Activated CD8-positive, alpha-beta T cell treated with anti-CD3 and anti-CD28 coated beads for 36 hours (primary cell): ENCODE measurements at regions of chr11 and their contacts with region 1.

Region 1: GRCh38 chr11:111777094-111778046 is 11.2 kb upstream of the PPP2R1B start:
- DNase-seq: peak; percentile 18
- ATAC-seq: peak; percentile 91
- H3K4me3 Mint-ChIP-seq: no peak overlapping the region
- H3K27ac Mint-ChIP-seq: no peak overlapping the region
- H3K4me1 Mint-ChIP-seq: no peaks in the 10 kb centered on the region
- H3K27me3 Mint-ChIP-seq: no peaks in the 10 kb centered on the region
- CTCF ChIP-seq: peak; percentile 80

Region 2: GRCh38 chr11:111565114-111565720 is 212.2 kb before region 1 on chr11:
- CTCF ChIA-PET with region 1: interaction called, 12 read pairs
- POLR2A ChIA-PET with region 1: no interaction called
- intact Hi-C with region 1: no loop called
- DNase-seq: peak; percentile 80
- ATAC-seq: peak; percentile 45
- H3K4me3 Mint-ChIP-seq: no peak overlapping the region
- H3K27ac Mint-ChIP-seq: no peak overlapping the region
- H3K4me1 Mint-ChIP-seq: peaks cover 4% of the 10 kb centered on the region
- H3K27me3 Mint-ChIP-seq: peaks cover under 1% of the 10 kb centered on the region
- CTCF ChIP-seq: peak; percentile 97

Region 3: DNA sequence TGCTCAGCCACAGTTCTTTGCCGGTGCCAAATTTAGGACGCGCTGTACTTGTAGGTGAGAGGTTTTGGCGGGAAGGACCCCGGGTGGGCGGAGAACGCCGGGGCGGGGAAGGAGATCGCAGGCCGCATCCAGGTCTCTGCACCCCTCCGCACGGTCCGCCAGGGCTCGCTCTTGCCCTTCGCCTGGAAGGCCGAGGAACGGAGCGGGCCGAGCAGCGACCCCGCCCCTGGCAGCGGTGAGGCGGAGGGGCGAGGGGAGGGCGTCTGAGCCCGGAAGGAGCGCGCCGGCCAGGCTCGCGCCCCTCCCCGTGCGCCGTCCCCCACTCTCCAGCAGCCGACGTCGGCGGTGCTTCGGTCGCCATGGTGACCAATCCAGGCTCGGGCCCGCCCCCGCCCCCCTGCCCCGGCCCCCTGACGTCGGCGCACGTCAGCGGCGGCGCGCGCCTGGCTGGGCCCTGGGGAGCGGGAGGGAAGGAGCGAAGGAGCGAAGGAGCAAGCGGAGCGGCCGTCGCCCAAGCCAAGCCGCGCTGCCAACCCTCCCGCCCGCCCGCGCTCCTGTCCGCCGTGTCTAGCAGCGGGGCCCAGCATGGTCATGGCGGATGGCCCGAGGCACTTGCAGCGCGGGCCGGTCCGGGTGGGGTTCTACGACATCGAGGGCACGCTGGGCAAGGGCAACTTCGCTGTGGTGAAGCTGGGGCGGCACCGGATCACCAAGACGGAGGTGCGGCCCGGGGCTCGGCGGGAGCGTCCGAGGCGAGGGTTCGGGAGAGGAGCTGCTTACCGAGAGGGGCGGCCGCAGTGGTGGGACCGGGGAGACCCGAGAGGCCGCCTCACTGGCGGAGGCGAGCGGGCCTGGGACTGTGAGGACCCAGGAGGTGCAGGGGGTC is 175.1 kb before region 1 on chr11 and contains the start of gene SIK2:
- CTCF ChIA-PET with region 1: interaction called, 42 read pairs
- POLR2A ChIA-PET with region 1: no interaction called
- intact Hi-C with region 1: loop called (anchors 1 kb)
- DNase-seq: peak; percentile 94
- ATAC-seq: peak; percentile 93
- H3K4me3 Mint-ChIP-seq: peak within 1 kb of the TSS; percentile 92
- H3K27ac Mint-ChIP-seq: peak within 1 kb of the TSS; percentile 93
- H3K4me1 Mint-ChIP-seq: peaks cover 28% of the 10 kb centered on the region
- H3K27me3 Mint-ChIP-seq: no peaks in the 10 kb centered on the region
- CTCF ChIP-seq: peak; percentile 74
- total RNA-seq, gene SIK2: 7.4 to 8.0 TPM

Region 4: DNA sequence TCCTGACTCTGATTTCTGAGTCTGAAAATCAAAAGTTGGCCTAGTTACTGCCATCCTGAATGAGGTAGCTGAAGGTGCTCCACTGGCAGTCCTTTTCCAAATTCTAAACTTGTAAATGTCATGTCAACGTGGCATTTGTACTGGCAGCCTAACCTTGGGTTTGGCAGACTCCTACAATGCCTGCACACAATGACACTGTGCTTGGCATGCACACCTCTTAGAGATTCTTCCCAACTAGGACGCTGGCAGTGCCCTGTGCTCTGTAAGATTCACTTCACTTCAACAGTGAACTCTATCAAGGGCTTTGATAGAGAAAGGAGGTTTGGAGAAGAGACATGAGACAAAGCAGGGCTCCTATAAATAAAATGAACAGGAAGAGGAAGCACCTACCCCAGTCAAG is 10.7 kb after region 1 on chr11:
- CTCF ChIA-PET with region 1: interaction called, 10 read pairs
- POLR2A ChIA-PET with region 1: interaction called, 3 read pairs
- intact Hi-C with region 1: no loop called
- DNase-seq: no peak
- ATAC-seq: no peak
- H3K4me3 Mint-ChIP-seq: no peak overlapping the region
- H3K27ac Mint-ChIP-seq: no peak overlapping the region
- H3K4me1 Mint-ChIP-seq: no peaks in the 10 kb centered on the region
- H3K27me3 Mint-ChIP-seq: no peaks in the 10 kb centered on the region
- CTCF ChIP-seq: no peak

Region 5: DNA sequence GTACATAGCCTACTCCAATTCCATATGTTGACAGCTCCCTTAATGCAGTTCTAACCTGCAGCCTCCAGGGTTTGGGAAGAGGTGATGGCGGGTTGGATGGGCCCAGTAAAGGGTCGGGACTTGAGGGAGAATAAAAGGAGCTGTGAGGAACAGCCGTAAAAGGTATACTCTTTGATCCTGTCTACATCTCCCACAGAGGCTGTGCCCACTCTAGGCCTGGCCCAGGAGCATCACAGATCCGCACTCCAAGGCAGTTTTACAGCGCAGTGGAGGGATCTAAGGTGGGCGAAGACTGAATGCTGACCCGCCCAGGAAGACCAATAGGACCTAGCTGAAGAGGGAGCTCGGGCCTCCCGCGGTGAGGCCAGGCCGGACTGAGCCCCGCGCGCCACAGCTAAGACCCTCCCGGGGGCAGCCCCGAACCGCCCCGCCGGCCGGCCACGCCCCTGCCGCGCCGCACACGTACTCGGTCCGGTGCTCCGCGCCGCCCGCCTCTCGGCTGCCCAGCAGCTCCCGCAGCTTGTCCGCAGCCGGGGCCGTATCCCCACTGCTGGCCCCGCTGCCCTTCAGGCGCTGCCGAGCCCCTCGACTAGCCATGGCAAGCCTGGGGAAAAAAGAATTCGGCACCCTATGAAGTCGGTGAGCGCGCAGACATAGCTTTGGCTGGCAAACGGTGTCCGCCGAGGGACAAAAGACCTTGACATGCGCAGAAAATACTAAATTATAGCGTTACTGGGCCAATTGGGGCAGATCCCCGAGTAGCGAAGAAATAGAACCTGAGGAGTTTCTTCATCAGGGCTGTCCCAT is 93.7 kb after region 1 on chr11 and contains the start of gene ALG9:
- CTCF ChIA-PET with region 1: no interaction called
- POLR2A ChIA-PET with region 1: no interaction called
- intact Hi-C with region 1: no loop called
- DNase-seq: peak; percentile 92
- ATAC-seq: peak; percentile 91
- H3K4me3 Mint-ChIP-seq: peak within 1 kb of the TSS; percentile 94
- H3K27ac Mint-ChIP-seq: peak within 1 kb of the TSS; percentile 91
- H3K4me1 Mint-ChIP-seq: peaks cover 27% of the 10 kb centered on the region
- H3K27me3 Mint-ChIP-seq: no peaks in the 10 kb centered on the region
- CTCF ChIP-seq: peak; percentile 21
- total RNA-seq, gene ALG9: 32.0 to 36.6 TPM